ENCODE measurements at regions of chr5 and their contacts with region 1.

Region 1: DNA sequence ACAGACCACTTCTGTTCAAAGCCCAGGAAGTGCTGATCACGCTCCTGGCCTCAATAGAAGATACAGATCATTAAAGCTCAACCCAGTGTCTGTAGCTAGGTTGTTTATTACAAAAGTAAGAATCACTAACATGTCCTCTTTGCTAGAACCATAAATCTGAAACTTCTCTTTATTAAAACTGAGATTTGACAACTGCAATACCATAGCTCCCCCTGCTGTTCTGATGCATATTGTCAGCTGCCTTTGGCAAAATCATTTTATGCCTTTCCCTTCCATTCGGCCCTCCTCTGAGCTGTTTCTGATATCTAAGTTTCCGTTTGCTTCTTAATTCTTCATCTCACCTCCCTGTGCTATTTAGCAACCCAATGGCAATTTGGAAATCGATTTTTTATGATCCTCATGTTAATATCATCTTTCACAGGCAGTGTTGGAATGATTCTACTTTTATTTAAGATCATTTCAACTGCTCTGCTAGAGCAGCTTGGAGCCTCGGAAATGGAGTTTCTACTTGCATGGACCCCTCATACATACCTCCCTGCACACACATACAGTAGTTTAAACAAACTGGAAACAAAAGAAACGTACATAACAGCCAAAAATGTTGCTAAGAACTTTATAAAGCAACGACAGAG is 998.8 kb downstream of the MAT2B start:
- DNase-seq: peak; percentile 37 to 43
- H3K4me3 ChIP-seq: no peak overlapping the region
- H3K27ac ChIP-seq: no peak overlapping the region
- H3K4me1 ChIP-seq: no peaks in the 10 kb centered on the region
- H3K27me3 ChIP-seq: no peaks in the 10 kb centered on the region
- CTCF ChIP-seq: peak in 5 of 6 experiments; percentile 36 to 86 (median 69)
- POLR2A ChIP-seq: no peak

Region 2: DNA sequence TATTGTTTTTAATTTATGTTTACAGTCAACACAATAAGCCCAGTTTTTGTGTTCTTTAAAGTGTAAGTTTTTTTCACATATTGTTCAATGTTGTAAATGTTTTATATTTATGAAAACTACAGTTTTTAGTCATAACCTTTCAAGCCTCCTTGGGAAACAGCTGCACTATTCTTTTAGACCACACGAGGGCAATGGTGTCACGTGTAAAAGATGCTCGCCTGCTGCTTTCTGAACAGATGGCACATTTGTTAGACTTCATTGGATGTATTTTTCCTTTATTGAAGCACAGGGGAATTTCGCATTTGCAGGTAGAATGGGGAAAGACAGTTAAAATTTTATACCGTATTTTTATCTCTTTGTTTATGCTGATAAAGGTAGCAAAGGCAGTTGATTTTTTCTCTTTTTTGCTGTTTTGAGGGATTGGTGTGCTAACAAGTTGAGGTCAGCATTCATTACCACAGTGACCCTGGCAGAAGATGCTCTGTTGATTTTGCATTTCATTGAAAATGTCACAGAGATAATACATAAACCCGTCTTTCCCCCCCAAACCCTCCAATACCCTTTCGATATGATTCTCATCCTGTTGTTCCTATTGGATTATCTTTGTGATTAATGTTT is 939.8 kb before region 1 on chr5:
- intact Hi-C with region 1: loop called (anchors 10 kb)
- DNase-seq: peak; percentile 44 to 49
- H3K4me3 ChIP-seq: no peak overlapping the region
- H3K27ac ChIP-seq: no peak overlapping the region
- H3K4me1 ChIP-seq: peaks cover 5 to 13% of the 10 kb centered on the region in 2 donors
- H3K27me3 ChIP-seq: no peaks in the 10 kb centered on the region
- CTCF ChIP-seq: peak; percentile 67 to 88 (median 84)
- POLR2A ChIP-seq: no peak

Region 3: GRCh38 chr5:163695830-163696578 is 808.3 kb before region 1 on chr5:
- intact Hi-C with region 1: loop called (anchors 10 kb)
- DNase-seq: peak; percentile 29 to 31
- H3K4me3 ChIP-seq: no peak overlapping the region
- H3K27ac ChIP-seq: no peak overlapping the region
- H3K4me1 ChIP-seq: no peaks in the 10 kb centered on the region
- H3K27me3 ChIP-seq: no peaks in the 10 kb centered on the region
- CTCF ChIP-seq: peak in 5 of 6 experiments; percentile 34 to 81 (median 68)
- POLR2A ChIP-seq: no peak

Region 4: GRCh38 chr5:164013077-164013670 is 491.1 kb before region 1 on chr5:
- intact Hi-C with region 1: loop called (anchors 5 kb)
- DNase-seq: peak; percentile 53 to 65
- H3K4me3 ChIP-seq: no peak overlapping the region
- H3K27ac ChIP-seq: no peak overlapping the region
- H3K4me1 ChIP-seq: no peaks in the 10 kb centered on the region
- H3K27me3 ChIP-seq: no peaks in the 10 kb centered on the region
- CTCF ChIP-seq: peak in 5 of 6 experiments; percentile 46 to 84 (median 68)
- POLR2A ChIP-seq: no peak